OCI-LY7 (cell line): ENCODE measurements at regions of chr17 and their contacts with region 1.

Region 1: DNA sequence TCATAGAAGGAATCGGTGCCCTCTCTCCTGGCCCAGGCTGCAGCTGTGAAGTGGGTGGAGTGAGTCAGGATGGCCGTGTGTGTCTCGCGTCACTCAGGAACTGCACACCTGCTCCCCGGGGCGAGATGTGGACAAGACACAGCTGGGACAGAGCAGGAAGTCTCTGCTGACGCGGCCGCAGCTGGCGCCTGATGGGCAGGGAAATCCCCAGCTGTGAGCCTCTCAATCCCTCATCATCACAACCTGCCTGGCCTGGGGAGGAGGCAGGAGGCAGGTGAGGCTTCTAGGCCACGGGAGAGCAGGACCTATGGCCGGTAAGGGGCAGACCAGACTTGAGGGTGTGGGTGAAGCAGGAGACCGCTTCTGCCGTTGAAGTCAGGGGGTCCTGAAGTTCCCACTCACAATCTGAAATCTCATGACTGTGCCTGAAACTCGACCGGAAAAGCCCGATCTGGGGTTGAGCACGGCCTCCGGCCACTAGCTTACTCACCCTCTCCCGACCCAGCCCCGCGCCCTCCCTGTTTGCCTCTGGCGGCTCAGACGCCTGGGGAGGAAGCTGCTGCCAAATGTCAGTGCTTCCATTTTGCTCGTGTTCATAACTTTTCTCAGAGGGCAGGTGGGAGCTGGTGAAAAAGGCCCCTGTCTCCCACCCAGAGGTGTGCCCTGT is 1.1 kb upstream of the TRPV3 start:
- DNase-seq: peak; percentile 91
- H3K4me3 ChIP-seq: peak overlapping the region; percentile 38
- H3K27ac ChIP-seq: peak overlapping the region; percentile 47
- H3K4me1 ChIP-seq: peaks cover 42% of the 10 kb centered on the region
- CTCF ChIP-seq: no peak

Region 2: GRCh38 chr17:3573246-3574100 is 14.7 kb after region 1 on chr17:
- CTCF ChIA-PET with region 1: no interaction called
- POLR2A ChIA-PET with region 1: interaction called, 6 read pairs
- intact Hi-C with region 1: loop called (anchors 1 kb)
- DNase-seq: peak; percentile 87
- H3K4me3 ChIP-seq: no peak overlapping the region
- H3K27ac ChIP-seq: peak overlapping the region; percentile 45
- H3K4me1 ChIP-seq: peaks cover 39% of the 10 kb centered on the region
- CTCF ChIP-seq: no peak

Region 3: GRCh38 chr17:3636154-3636907 is 77.6 kb after region 1 on chr17 and contains the starts of genes CTNS and SHPK:
- CTCF ChIA-PET with region 1: no interaction called
- POLR2A ChIA-PET with region 1: interaction called, 5 read pairs
- intact Hi-C with region 1: loop called (anchors 1 kb)
- DNase-seq: peak; percentile 98
- H3K4me3 ChIP-seq: peak within 1 kb of the TSS; percentile 90
- H3K27ac ChIP-seq: peak within 1 kb of the TSS; percentile 68
- H3K4me1 ChIP-seq: peaks cover 13% of the 10 kb centered on the region
- CTCF ChIP-seq: no peak
- total RNA-seq, gene CTNS: 5.6 and 6.7 TPM in 2 replicates
- total RNA-seq, gene SHPK: 17.0 and 21.4 TPM in 2 replicates

Region 4: GRCh38 chr17:3647769-3648555 is 89.2 kb after region 1 on chr17:
- CTCF ChIA-PET with region 1: no interaction called
- POLR2A ChIA-PET with region 1: interaction called, 3 read pairs
- intact Hi-C with region 1: loop called (anchors 2 kb)
- DNase-seq: peak; percentile 78
- H3K4me3 ChIP-seq: no peak overlapping the region
- H3K27ac ChIP-seq: no peak overlapping the region
- H3K4me1 ChIP-seq: peaks cover 32% of the 10 kb centered on the region
- CTCF ChIP-seq: peak; percentile 76